ENCODE measurements at regions of chr4 and their contacts with region 1.

Region 1: DNA sequence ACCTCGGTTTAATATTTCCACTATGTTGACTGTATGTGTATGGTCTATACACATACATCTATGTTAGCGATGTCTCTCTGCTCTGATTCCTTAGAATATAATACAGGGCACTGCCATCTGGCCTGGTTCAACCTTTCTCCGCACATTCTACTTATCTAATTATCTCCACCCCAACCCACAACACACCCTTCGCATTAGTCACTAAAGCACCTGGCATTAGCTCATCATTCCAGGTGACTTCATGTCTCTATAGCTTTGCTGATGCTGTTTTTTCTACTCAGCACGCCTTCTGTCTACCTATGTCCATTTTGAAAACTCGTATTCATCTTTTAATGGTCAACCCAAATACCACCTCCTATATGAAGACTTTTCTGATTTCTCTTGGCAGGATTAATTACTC is 425.2 kb upstream of the RASGEF1B start:
- DNase-seq: no peak
- ATAC-seq: no peak
- H3K4me3 Mint-ChIP-seq: no peak overlapping the region
- H3K27ac Mint-ChIP-seq: no peak overlapping the region
- H3K4me1 Mint-ChIP-seq: peaks cover 8% of the 10 kb centered on the region
- H3K27me3 Mint-ChIP-seq: no peaks in the 10 kb centered on the region

Region 2: GRCh38 chr4:81946996-81947395 is 50.1 kb after region 1 on chr4:
- CTCF ChIA-PET with region 1: no interaction called
- POLR2A ChIA-PET with region 1: interaction called, 10 read pairs
- intact Hi-C with region 1: no loop called
- DNase-seq: no peak
- ATAC-seq: no peak
- H3K4me3 Mint-ChIP-seq: no peak overlapping the region
- H3K27ac Mint-ChIP-seq: no peak overlapping the region
- H3K4me1 Mint-ChIP-seq: no peaks in the 10 kb centered on the region
- H3K27me3 Mint-ChIP-seq: peaks cover 11% of the 10 kb centered on the region